ENCODE measurements at regions of chr7 and their contacts with region 1.

Region 1: DNA sequence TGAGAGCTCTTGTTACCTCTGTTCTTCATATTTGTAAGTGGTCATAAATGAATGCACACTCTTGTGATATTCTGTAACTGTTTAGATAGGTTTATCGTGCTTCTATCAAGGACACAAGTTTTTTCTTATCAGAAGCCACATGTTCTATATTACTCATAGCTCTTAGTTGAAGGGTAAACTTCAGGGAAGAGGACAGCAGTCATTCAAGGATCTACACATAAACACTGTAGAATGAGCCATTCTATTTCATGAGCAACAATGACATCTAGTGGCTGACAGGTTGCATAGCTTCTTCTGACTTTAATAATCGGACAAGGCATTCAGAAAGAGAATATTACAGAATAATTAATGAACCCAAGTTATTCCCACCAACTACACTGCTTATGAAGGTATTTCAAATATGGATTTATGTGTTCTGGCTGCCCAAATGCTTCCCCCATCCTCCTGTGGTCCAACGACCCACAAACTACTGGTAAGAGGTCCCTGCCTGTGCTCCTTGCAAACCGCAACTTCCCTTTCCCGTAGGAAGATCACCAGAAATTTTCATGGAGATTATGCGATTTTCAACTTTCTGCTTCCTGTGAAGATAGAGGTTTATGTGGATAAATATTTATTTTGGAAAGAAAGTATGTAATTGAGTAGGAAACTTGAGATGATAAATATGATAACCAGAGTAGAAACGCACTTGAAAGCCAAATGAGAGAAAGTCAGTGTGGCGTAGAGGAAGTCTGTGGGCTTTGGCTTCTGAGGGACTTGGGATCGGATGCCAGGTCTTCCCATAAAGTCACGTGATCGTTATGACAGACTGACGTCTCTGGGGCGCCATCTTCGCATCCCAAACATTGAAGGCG is 16.8 kb upstream of the ABCB5 start:
- DNase-seq: peak; percentile 71
- ATAC-seq: peak; percentile 84
- H3K4me3 ChIP-seq: no peak overlapping the region
- H3K27ac ChIP-seq: no peak overlapping the region
- H3K4me1 ChIP-seq: no peaks in the 10 kb centered on the region
- H3K27me3 ChIP-seq: no peaks in the 10 kb centered on the region
- CTCF ChIP-seq: peak; percentile 88
- POLR2A ChIP-seq: no peak
- RAD21 ChIP-seq: peak; percentile 95

Region 2: DNA sequence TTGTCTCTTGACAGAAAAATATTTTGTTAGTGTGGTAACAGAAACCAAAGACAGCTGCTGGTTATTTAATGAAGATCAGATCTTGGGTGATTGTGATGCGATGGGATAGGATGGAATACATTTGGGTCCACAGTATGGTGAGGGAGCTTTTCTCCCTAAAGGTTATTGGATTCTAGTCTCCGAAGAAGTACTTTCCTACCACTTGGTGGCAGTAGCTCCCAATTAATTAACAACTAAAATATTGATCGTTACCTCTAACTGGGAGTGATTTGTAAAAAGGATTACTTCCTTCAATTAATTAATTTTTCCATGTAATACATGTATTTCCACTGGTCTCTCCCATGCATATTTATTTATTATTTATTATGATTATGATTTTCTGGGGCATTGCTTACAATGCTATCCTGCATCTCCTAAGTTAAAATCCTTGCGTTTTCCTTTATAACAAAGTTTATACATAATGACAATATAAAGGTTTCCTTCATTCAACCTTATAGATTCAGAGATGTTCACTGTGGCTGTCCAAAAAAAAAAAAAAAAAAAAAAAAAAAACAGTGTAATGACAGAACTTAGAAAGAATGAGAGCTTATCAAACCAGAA is 850.8 kb before region 1 on chr7:
- CTCF ChIA-PET with region 1: interaction called, 13 read pairs
- POLR2A ChIA-PET with region 1: no interaction called
- dilution Hi-C with region 1: loop called (anchors 25 kb)
- in situ Hi-C with region 1: loop called (anchors 5 kb)
- intact Hi-C with region 1: loop called (anchors 1 kb)
- DNase-seq: peak; percentile 22
- ATAC-seq: peak; percentile 56
- H3K4me3 ChIP-seq: no peak overlapping the region
- H3K27ac ChIP-seq: no peak overlapping the region
- H3K4me1 ChIP-seq: no peaks in the 10 kb centered on the region
- H3K27me3 ChIP-seq: no peaks in the 10 kb centered on the region
- CTCF ChIP-seq: peak; percentile 59
- POLR2A ChIP-seq: no peak
- RAD21 ChIP-seq: peak; percentile 55

Region 3: DNA sequence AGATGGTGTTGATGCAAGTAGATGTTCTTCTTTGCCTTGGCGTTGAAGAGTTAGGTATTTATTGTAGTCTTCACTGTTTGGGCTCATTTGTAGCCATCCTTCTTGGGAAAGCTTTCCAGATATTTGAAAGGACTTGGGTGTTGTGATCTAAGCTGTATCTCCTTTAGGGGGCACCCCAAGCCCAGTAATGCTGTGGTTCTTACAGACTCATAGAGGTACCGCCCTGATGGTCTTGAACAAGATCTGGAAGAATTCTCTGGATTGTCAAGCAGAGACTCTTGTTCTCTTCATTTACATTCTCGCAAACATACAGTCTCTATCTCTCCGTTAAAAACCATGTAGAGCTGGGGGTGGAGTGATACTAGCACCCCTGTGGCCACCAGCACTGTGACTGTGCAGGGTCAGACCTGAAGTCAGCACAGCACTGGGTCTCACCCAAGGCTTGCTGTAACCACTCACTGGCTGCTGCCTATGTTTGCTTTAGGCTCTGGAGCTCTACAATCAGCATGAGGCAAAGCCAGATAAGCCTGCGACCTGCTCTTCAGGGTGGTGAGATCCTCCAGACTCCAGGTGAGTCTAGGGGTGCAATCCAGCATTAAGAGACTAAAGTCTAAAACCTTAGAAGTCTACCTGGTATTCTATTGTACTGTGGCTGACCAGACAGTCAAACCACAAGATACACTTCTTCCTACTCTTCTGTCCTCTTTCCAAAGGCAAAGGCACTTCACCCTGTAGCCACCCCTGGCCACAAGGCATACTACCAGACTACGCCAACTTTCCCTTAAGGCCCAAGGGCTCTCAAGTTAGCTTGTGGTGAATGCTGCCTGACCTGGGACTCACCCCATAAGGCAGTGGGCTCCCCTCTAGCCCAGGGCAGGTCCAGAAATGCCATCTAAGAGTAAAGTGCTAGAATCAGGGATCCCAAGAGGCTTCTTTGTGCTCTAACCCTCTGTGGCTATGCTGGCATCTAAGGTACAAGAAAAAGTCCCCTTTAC is 615.5 kb before region 1 on chr7:
- CTCF ChIA-PET with region 1: no interaction called
- POLR2A ChIA-PET with region 1: no interaction called
- dilution Hi-C with region 1: no loop called
- in situ Hi-C with region 1: loop called (anchors 5 kb)
- intact Hi-C with region 1: loop called (anchors 1 kb)
- DNase-seq: peak; percentile 77
- ATAC-seq: peak; percentile 81
- H3K4me3 ChIP-seq: no peak overlapping the region
- H3K27ac ChIP-seq: no peak overlapping the region
- H3K4me1 ChIP-seq: no peaks in the 10 kb centered on the region
- H3K27me3 ChIP-seq: no peaks in the 10 kb centered on the region
- CTCF ChIP-seq: peak; percentile 59
- POLR2A ChIP-seq: no peak
- RAD21 ChIP-seq: peak; percentile 76

Region 4: DNA sequence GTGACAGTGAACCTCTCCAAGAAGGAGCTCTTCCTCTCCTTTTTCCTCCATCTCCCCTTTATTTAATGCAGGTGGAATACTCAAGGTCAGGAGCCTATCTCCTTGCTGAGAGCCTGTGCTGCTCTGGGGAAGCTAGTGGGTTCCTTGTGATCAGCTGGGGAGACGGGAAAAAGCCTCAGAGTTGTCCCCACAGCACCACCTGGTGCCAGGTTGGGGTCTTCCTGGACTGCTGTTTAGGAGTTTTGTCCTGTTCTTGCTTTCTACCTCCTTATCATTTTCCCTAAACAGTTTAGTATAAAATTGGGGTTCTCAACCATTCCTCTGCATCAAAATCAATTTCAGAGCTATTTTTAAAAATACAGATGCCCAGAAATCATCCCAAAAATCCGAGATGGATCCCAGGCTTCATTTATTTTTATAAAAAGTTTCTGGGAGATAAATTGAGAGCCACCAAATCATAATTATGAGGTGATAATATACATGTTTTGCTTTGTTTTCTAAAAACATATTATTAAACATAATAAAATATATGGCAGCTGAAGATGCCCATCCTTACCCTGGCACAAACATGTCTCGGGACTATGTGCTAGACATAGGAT is 425.8 kb before region 1 on chr7:
- CTCF ChIA-PET with region 1: no interaction called
- POLR2A ChIA-PET with region 1: no interaction called
- dilution Hi-C with region 1: no loop called
- in situ Hi-C with region 1: loop called (anchors 25 kb)
- intact Hi-C with region 1: no loop called
- DNase-seq: peak; percentile 40
- ATAC-seq: peak; percentile 63; the same call in 1 of the 2 replicates
- H3K4me3 ChIP-seq: no peak overlapping the region
- H3K27ac ChIP-seq: no peak overlapping the region
- H3K4me1 ChIP-seq: no peaks in the 10 kb centered on the region
- H3K27me3 ChIP-seq: no peaks in the 10 kb centered on the region
- CTCF ChIP-seq: peak; percentile 37
- POLR2A ChIP-seq: no peak
- RAD21 ChIP-seq: peak; percentile 36; the same call in 1 of the 2 replicates

Region 5: DNA sequence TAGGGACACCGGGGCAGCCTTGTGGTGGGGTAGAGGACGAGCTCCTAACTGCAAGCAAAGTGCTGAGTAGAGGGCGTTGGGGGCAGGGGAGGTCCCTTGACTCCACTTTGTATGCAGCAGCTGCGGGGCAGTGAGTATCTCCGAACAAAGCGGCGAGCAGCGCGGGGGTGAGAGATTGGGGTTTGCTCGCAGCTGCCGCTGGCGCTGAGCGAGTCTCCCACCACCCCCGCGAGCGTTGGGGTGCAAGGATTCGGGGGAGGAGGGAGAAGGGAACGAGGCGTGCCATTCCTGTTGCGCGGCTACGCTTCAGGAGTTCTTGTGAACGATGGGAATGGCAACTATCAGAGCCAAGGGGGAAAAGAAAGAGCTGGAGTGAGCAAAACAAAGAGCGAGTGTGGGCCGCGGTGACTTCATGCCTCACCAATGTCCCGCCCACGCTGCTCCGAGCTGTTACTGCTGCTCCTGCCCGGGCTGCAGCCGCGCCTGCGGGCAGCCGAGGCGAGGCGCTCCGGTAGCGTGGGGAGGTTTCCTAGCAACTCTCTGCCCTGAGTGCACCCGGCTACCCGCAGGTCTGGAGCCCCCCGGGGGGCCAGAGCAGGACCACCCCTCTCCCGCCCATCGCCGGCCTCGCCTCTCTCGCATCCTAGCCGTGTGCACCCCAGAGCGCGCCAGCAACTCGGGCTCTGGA is 268.3 kb before region 1 on chr7 and contains the start of gene ITGB8:
- CTCF ChIA-PET with region 1: no interaction called
- POLR2A ChIA-PET with region 1: no interaction called
- dilution Hi-C with region 1: no loop called
- in situ Hi-C with region 1: no loop called
- intact Hi-C with region 1: loop called (anchors 5 kb)
- DNase-seq: peak; percentile 94
- ATAC-seq: peak; percentile 84
- H3K4me3 ChIP-seq: peak within 1 kb of the TSS; percentile 51
- H3K27ac ChIP-seq: peak within 1 kb of the TSS; percentile 82
- H3K4me1 ChIP-seq: peaks cover 2% of the 10 kb centered on the region; the same call in 1 of the 2 replicates
- H3K27me3 ChIP-seq: no peaks in the 10 kb centered on the region
- CTCF ChIP-seq: no peak
- POLR2A ChIP-seq: peak; percentile 48; the same call in 1 of the 2 replicates
- RAD21 ChIP-seq: no peak
- total RNA-seq, gene ITGB8: 10.2 and 10.8 TPM in 2 replicates

Measured in IMR-90 (cell line).